ENCODE measurements at regions of chr15 and their contacts with region 1.

Region 1: GRCh38 chr15:22253676-22254408 is 173.5 kb downstream of the OR4M2 start:
- DNase-seq: no peak
- ATAC-seq: no peak
- H3K4me3 ChIP-seq: no peak overlapping the region
- H3K27ac ChIP-seq: peak overlapping the region; percentile 22 to 82 (median 81)
- H3K4me1 ChIP-seq: peaks cover 0 to 62% (median 20%) of the 10 kb centered on the region in 4 donors
- H3K27me3 ChIP-seq: no peaks in the 10 kb centered on the region
- CTCF ChIP-seq: no peak
- POLR2A ChIP-seq: no peak

Region 2: DNA sequence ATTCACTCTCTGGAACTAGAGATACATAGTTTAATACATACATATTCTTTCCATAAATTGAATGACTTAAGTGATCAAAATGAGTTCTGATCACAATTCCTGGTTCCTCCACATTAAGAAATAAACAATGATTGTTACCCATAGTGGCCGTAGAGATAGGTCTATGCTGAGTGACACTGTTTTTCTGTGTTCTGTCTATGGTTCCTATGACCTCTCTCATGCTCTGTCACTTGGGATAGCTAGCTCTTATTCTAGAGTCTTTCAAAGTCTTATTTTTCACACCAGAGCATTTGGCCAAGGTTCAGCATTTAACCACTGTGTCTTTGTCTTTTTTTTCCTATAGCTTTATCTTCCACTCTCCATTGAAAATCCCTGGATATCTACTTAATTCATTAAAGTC is 1844.6 kb before region 1 on chr15:
- intact Hi-C with region 1: loop called in 1 of 2 experiments (anchors 10 kb)
- DNase-seq: no peak
- ATAC-seq: peak in 2 of 4 donors; percentile 13 to 31
- H3K4me3 ChIP-seq: no peak overlapping the region
- H3K27ac ChIP-seq: no peak overlapping the region
- H3K4me1 ChIP-seq: no peaks in the 10 kb centered on the region
- H3K27me3 ChIP-seq: no peaks in the 10 kb centered on the region
- CTCF ChIP-seq: no peak
- POLR2A ChIP-seq: no peak

Region 3: DNA sequence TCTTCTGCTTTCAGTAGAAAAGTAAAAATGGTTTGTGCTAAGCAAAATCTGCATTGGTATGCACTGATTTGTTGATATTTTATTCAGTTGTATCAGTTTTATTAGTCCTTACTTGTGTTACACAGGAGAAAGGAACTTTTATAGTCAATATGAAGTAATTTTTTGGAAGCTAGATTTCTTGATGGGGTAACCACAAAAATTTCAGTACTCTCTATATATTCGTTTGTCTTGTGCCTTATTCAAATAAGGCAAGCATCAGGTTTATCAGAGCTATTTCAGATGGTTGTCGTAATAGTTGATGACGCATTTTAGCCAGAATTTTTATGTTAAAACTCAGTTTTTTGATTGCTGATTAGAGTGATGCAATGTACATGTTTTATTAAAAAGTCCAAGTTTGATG is 481.9 kb after region 1 on chr15:
- intact Hi-C with region 1: no loop called
- DNase-seq: no peak
- ATAC-seq: no peak
- H3K4me3 ChIP-seq: no peak overlapping the region
- H3K27ac ChIP-seq: no peak overlapping the region
- H3K4me1 ChIP-seq: no peaks in the 10 kb centered on the region
- H3K27me3 ChIP-seq: no peaks in the 10 kb centered on the region
- CTCF ChIP-seq: no peak
- POLR2A ChIP-seq: no peak

Measured in right lobe of liver (tissue), 6 donors.